ENCODE measurements at regions of chr7 and their contacts with region 1.

Region 1: DNA sequence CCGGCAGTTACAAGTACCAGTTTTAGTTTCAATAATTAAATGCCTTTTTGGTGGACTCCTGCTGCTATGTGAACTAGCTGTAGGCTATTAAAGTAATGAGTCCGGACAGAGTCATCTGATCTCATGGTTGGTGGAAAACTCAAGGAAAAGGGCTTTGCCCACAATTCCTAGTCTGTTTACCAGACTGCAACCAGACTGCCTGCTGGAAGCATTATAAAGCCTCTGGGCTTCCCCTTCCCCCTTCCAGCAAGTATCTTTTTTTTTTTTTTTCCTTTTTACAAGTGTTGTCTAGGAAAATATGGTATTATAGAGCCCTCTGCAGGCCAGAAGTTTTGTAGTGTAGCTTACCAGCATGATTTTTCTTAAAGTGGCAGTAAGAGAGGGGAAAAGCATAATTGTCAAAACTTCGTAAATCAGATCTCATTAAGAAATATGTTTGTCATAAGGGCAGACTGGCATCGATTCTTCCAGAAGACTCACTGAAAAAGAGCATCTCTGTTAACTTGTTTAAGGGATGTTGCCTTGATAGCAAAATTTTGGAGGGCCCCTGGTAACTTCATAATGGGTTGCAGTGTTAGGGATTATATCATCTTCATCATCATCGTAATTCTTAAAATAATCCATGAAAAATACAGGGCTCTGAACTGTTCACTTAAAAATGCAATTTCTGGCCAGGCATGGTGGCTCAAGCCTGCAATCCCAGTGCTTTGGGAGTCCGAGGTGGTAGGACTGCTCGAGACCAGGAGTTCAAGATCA is 181.3 kb downstream of the TAX1BP1 start:
- DNase-seq: peak; percentile 94
- H3K4me3 ChIP-seq: no peak overlapping the region
- H3K27ac ChIP-seq: no peak overlapping the region
- H3K4me1 ChIP-seq: peaks cover 37% of the 10 kb centered on the region
- H3K27me3 ChIP-seq: no peaks in the 10 kb centered on the region
- CTCF ChIP-seq: peak; percentile 42 to 45
- POLR2A ChIP-seq: no peak

Region 2: DNA sequence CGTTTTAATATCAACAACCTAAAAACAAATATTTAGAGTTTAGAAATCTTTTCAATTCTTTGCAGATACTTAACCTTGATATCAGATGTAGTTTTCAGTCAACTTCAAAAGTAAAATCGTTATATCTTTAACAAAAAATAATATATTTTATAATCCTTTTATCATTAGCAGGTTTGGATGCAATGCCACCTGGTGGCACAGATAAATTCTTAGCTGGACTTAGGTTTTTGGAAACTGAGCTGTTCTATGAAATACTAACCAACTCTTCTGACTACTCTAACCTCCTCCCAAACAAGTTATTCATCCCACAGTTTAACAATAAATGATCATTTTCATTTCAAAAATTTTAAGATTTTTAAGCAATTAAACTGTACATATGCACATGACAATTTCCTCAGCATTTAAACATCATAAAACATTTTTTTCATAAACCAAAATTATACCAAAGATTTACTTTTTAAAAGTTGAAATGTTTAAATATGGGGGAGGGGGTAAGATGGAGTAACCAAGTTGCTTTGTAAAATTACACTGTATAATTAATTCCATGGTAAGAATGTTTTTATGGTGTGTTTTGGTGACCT is 315.5 kb before region 1 on chr7:
- CTCF ChIA-PET with region 1: interaction called, 21 read pairs
- POLR2A ChIA-PET with region 1: no interaction called
- dilution Hi-C with region 1: no loop called
- intact Hi-C with region 1: loop called (anchors 10 kb)
- DNase-seq: peak; percentile 63
- H3K4me3 ChIP-seq: peak overlapping the region in 1 of 3 experiments; percentile 24
- H3K27ac ChIP-seq: peak overlapping the region; percentile 66
- H3K4me1 ChIP-seq: peaks cover 25% of the 10 kb centered on the region
- H3K27me3 ChIP-seq: no peaks in the 10 kb centered on the region
- CTCF ChIP-seq: peak in 1 of 2 donors; percentile 41
- POLR2A ChIP-seq: no peak

Region 3: DNA sequence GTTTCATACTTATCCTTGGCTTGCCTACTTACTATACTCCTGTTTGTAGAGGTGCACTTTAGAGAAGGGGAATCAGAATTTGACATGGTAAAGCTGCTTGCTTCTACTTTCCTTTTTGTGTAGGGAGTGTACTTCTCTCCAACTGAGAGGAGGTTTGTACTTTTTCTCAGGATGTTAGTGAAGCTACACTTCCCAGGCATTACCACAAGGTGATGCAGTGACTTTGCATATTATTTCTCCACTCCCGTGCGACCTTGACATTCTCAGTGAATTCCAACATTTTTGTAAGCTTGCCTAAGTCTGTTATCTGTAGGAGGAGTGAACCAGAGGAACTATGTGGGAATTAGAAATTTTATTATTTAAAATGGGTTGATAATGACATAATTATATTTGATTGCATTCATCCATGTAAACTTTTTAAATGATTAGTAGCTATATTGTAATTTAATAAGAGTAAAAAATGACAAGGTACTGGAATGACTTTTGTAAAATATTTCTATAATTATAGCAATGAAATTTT is 176.1 kb before region 1 on chr7:
- CTCF ChIA-PET with region 1: interaction called, 52 read pairs
- POLR2A ChIA-PET with region 1: no interaction called
- dilution Hi-C with region 1: no loop called
- intact Hi-C with region 1: loop called (anchors 1 kb)
- DNase-seq: peak; percentile 85
- H3K4me3 ChIP-seq: no peak overlapping the region
- H3K27ac ChIP-seq: peak overlapping the region; percentile 49
- H3K4me1 ChIP-seq: peaks cover 11% of the 10 kb centered on the region
- H3K27me3 ChIP-seq: no peaks in the 10 kb centered on the region
- CTCF ChIP-seq: peak; percentile 54 to 65
- POLR2A ChIP-seq: no peak

Region 4: DNA sequence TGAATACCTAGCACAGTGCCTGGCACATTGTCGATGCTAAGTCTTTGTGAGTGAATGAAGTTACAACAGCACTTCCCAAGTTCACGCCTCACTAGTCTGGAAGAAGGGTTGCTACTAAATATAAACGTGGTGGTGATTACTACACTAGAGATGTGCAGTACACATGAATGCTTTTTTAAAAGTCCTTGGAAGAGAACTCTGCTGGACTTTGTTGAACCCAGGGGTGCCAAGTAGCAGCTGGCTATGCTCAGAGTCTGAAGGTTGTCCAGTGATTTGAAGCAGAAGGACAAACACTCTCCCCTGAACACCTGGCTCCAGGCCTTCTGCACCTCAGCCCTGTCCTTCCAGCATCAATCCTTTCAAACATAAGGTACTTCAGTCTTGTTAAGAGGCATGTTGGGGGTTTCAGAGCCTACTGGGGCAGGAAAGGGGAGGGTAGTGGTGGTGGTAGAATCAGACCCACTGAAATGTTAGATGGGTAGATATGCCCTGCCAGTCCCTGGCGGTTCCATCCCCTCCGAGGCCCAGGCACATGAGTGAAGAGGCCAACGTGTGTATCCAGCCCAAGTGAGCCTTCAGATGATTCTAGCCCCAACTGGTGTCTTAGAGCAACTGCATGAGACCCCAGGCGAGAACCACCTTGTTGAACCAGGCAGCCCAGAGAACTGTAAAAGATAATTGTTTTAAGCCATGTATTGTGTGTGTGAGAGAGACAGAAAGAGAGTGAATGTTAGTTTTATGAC is 86.9 kb before region 1 on chr7:
- CTCF ChIA-PET with region 1: interaction called, 5 read pairs
- POLR2A ChIA-PET with region 1: no interaction called
- dilution Hi-C with region 1: no loop called
- intact Hi-C with region 1: loop called (anchors 2 kb)
- DNase-seq: no peak
- H3K4me3 ChIP-seq: no peak overlapping the region
- H3K27ac ChIP-seq: no peak overlapping the region
- H3K4me1 ChIP-seq: peaks cover 11% of the 10 kb centered on the region
- H3K27me3 ChIP-seq: no peaks in the 10 kb centered on the region
- CTCF ChIP-seq: no peak
- POLR2A ChIP-seq: no peak

Region 5: DNA sequence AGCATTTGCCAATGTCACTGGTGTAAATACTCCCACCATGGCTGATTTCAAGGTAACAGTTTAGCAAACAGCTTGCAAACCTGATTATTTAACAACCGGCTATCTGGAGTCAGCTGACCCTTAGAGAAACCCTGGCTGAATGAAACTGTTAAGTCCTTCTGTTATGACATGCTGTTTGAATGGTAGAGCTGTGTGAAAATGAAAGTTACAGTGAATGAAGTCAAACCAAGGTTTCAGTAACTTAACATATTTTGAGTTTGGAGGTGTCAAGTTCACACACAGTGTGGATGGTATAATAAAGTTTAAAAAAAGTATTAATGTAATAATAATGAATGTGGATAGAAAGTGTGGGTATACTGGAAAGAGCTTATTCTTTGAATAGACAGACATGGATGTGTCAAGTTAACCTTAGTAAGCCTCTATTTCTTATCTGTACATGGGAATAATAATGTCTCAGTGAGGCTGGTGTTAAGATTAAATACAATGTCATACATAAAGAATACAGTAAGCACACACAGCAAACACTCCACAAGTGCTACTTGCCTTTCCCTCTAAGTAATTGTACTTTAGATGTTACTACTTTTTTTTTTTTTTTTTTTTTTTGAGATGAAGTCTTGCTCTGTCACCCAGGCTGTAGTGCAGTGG is 30.9 kb before region 1 on chr7:
- CTCF ChIA-PET with region 1: no interaction called
- POLR2A ChIA-PET with region 1: no interaction called
- dilution Hi-C with region 1: no loop called
- intact Hi-C with region 1: no loop called
- DNase-seq: no peak
- H3K4me3 ChIP-seq: no peak overlapping the region
- H3K27ac ChIP-seq: no peak overlapping the region
- H3K4me1 ChIP-seq: peaks cover 1% of the 10 kb centered on the region
- H3K27me3 ChIP-seq: no peaks in the 10 kb centered on the region
- CTCF ChIP-seq: no peak
- POLR2A ChIP-seq: no peak

Region 6: GRCh38 chr7:28020302-28020940 is 99.2 kb after region 1 on chr7:
- CTCF ChIA-PET with region 1: interaction called, 5 read pairs
- POLR2A ChIA-PET with region 1: no interaction called
- dilution Hi-C with region 1: no loop called
- intact Hi-C with region 1: loop called (anchors 1 kb)
- DNase-seq: peak; percentile 80
- H3K4me3 ChIP-seq: no peak overlapping the region
- H3K27ac ChIP-seq: no peak overlapping the region
- H3K4me1 ChIP-seq: no peaks in the 10 kb centered on the region
- H3K27me3 ChIP-seq: no peaks in the 10 kb centered on the region
- CTCF ChIP-seq: peak; percentile 70 to 75
- POLR2A ChIP-seq: no peak